Dendritic cell treated with granulocyte-macrophage colony-stimulating factor and Interleukin-4, amounts not matched to agents 40 ng/mL and 50 ng/mL, for 4 days (primary cell): ENCODE measurements at regions of chr16 and their contacts with region 1.

Region 1: GRCh38 chr16:89560378-89561141 is at the start of gene RPL13:
- H3K4me3 Mint-ChIP-seq: peak within 1 kb of the TSS; percentile 91
- H3K27ac Mint-ChIP-seq: peak within 1 kb of the TSS; percentile 99
- H3K4me1 Mint-ChIP-seq: peaks cover 71% of the 10 kb centered on the region
- H3K27me3 Mint-ChIP-seq: no peaks in the 10 kb centered on the region

Region 2: DNA sequence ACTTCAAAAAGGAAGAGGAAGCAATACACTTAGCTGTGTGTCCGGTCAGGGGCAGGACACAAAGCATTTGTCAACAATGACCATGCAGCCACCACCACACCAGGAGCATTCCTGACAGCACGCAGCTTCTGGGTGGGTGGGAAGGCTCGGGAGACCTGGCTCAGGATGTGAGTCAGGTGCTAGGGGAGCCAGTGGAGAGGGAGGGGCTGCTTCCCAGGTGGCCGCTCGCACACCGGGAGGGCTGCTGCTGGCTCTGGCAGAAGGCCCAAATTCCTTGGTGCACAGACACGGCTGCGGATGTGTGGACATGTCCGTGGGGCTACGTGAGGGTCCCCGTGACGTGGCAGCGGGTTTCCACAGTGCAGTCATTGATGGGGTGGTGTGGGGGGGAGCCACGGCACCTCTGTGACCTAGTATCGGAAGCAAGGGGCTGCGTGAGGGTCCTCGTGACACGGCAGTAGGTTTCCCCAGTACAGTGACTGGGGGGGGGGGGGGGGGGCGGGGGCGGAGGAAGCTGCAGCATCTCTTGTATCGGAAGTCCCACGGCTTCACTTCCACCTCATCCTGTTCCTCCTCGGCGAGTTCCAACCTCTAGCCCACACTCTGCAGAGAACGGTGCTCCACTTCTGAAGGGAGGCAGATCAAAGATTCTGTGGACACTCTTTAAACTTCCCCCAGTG is 230.2 kb before region 1 on chr16:
- intact Hi-C with region 1: loop called (anchors 1 kb)
- H3K4me3 Mint-ChIP-seq: peak overlapping the region; percentile 35
- H3K27ac Mint-ChIP-seq: peak overlapping the region; percentile 54
- H3K4me1 Mint-ChIP-seq: peaks cover 78% of the 10 kb centered on the region
- H3K27me3 Mint-ChIP-seq: no peaks in the 10 kb centered on the region